Posterior cingulate gyrus (tissue), 11 donors: ENCODE measurements at regions of chr5 and their contacts with region 1.

Region 1: DNA sequence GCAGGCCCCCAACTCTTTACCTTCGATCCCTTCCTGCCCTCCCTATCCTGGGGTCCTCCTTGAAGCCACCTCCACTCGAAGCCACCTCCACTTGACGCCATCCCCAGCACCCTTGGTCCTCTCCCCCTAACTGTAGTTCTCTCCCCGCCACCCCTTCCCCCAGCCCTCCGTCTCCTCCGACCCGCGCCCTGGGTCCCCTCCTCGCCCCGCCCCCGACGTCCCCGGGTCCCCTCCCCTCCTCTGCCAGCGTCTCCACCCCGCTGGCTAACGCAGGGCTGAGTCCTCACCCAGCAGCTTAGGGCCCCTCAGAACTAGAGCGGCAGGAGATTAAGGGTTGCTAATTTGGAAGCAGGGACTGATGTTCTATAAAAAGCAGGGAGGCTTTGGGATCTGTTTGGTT is 30.6 kb upstream of the ANKRD33B start:
- DNase-seq: peak in 4 of 10 donors; percentile 30 to 81 (median 57)

Region 2: DNA sequence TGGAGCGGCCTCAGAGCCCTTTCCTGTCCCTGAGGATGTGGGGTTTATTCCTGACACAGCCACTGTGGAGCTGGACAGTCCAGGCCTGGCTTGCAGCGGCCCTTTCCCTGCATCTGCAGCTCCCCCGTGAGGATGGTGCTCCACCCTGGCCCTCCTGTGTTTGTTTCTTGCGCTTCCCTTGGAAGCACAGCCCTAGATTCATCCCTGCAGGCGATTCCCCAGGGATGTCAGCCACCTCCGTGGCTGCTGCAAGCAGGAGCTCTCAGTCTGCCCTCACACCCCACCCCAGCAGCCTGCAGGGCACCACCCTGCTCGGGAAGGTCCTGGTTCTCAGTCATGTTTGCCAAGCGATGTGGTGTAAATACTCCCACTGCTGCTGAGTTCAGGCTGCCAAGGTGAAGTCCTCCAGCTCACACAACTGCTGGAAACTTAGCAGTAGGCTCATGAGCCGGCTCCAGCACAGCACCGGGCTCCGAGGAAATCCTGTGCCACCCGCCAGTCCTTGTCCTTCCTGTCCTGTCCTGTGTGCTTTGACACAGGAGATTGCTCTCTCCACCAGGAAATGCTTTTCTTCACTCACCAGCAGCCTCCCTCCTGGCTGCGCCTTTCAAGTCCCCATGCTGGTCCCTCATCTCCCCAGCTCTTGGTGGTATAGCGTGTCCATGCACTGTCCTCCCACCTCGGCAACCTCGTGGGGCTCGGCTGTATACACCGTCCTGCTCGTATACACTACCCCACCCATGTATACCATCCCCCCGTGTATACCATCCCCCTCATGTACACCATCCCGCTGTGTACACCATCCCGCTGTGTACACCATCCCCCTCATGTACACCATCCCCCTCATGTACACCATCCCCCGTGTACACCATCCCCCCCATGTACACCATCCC is 75.3 kb before region 1 on chr5:
- intact Hi-C with region 1: loop called (anchors 5 kb)
- DNase-seq: peak in 5 of 10 donors; percentile 18 to 90 (median 83)

Region 3: DNA sequence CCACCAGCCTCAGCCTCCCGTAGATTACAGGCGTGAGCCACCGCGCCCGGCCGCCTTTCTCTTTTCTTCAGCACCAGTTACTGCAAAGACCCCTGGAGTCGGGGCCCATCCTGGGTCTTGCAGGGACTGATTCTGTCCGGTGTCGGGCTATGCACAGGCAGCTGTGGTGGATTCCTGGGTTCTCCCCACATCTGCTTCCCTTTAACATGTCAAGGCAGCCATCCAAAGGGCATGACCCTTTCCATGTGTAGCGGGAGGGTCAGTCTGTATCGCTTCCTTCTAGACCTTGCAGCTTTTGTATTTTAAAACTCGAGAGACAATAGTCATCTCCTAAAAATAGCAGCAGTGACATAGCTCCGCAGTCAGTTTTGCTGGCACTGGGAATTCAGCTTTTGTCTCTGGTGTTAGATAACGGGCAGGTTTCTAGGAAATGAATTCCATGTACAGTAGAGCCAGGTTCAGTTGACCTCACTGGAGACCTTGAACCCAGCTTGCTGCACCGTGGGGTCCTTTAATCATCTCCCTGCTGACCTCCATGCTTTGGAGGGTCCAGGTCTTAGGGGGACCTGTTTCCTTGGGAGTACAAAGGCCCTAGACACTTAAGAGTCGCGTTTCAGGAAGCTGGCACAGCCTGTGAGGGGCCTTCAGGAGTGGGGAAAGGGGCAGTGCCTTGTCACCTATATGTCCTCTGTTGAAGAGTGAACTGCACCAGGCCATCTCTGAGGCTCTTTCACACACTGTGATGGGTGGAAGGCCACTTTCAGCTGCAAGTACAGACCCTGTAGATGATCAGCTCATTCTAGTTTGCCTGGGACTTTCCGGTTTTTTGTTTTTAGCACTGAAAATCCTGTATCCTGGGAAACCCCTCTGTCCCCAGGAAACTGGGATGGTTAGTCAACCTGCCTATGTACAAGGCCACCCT is 44.4 kb after region 1 on chr5:
- intact Hi-C with region 1: no loop called
- DNase-seq: peak in 1 of 10 donors; percentile 76